Left ventricle myocardium inferior (tissue), 1 donor: ENCODE measurements at regions of chr6 and their contacts with region 1.

Region 1: DNA sequence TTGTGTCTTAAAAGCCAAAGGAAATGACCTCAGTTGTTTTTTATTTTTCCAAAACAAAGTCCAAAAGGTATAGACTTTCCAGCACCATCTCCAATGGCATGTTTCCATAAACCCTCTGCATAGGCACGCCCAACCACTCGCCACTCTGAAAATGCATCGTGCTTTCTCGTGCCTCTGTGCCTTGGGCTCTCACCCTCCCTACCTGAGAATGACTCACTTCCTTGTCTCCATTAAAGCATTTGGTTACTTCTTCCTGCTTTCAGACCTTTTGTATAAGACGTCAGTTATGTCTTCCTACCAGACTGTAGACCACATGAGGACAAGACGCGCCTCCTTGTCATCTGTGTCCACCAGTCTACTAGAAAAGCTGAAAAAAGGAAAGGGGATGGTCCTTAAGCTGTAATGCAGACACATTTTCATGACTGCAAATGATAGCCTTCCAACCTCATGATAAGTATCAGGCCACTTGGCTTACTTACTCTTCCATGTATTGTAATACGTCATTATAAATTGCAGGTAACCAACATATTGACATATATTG is 61.2 kb upstream of the CDYL start:
- DNase-seq: no peak
- H3K4me3 ChIP-seq: no peak overlapping the region
- H3K27ac ChIP-seq: no peak overlapping the region
- H3K4me1 ChIP-seq: no peaks in the 10 kb centered on the region
- H3K27me3 ChIP-seq: no peaks in the 10 kb centered on the region
- CTCF ChIP-seq: no peak

Region 2: GRCh38 chr6:4736366-4736885 is 21.4 kb after region 1 on chr6:
- intact Hi-C with region 1: loop called (anchors 2 kb)
- DNase-seq: no peak
- H3K4me3 ChIP-seq: no peak overlapping the region
- H3K27ac ChIP-seq: no peak overlapping the region
- H3K4me1 ChIP-seq: peaks cover 6% of the 10 kb centered on the region
- H3K27me3 ChIP-seq: peaks cover 13% of the 10 kb centered on the region
- CTCF ChIP-seq: no peak